Activated naive CD4-positive, alpha-beta T cell treated with anti-CD3 and anti-CD28 coated beads for 36 hours (primary cell): ENCODE measurements at regions of chrX and their contacts with region 1.

Region 1: DNA sequence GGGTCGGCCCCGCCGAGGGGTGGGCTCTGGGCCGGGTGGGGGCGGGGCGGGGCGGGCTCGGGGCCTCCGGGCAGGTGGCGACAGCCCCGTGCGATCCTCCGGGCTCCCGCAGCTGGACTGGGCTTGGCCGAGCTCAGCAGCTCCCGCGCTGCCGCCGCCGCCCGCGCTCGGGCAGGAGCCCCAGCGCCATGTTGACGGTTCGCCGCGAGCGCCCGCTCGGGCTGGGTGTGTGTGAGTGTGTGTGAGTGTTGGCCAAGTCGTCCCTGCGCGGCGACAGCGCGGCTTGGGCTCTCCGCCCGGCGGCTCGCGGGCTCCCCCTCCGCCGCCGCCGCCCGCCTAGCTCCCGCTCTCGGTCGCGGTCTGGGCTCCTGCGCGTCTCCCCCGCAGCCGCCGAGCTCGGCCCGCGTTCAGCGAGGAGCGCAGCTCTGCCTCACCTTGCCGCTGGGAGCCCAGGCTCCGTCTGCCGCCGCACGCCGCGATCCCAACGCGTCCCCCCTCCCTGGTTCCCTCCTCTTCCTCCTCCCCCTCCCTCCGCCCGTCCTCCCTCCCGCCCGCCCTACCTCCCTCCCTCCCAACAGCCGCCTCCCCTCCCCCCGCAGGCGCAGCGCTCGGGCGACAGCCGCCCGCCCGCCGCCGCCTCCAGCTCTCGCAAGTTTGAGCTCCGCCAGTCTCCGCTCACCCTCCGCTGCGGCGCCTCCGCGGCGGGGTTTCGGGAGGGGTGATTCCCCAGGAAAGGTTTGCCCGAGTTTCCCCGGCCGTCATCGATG is at the start of gene BCOR:
- DNase-seq: peak; percentile 75
- H3K4me3 Mint-ChIP-seq: peak within 1 kb of the TSS; percentile 86
- H3K27ac Mint-ChIP-seq: peak within 1 kb of the TSS; percentile 82
- H3K4me1 Mint-ChIP-seq: peaks cover 24% of the 10 kb centered on the region
- H3K27me3 Mint-ChIP-seq: no peaks in the 10 kb centered on the region
- total RNA-seq, gene BCOR: 29.1 to 29.9 TPM

Region 2: DNA sequence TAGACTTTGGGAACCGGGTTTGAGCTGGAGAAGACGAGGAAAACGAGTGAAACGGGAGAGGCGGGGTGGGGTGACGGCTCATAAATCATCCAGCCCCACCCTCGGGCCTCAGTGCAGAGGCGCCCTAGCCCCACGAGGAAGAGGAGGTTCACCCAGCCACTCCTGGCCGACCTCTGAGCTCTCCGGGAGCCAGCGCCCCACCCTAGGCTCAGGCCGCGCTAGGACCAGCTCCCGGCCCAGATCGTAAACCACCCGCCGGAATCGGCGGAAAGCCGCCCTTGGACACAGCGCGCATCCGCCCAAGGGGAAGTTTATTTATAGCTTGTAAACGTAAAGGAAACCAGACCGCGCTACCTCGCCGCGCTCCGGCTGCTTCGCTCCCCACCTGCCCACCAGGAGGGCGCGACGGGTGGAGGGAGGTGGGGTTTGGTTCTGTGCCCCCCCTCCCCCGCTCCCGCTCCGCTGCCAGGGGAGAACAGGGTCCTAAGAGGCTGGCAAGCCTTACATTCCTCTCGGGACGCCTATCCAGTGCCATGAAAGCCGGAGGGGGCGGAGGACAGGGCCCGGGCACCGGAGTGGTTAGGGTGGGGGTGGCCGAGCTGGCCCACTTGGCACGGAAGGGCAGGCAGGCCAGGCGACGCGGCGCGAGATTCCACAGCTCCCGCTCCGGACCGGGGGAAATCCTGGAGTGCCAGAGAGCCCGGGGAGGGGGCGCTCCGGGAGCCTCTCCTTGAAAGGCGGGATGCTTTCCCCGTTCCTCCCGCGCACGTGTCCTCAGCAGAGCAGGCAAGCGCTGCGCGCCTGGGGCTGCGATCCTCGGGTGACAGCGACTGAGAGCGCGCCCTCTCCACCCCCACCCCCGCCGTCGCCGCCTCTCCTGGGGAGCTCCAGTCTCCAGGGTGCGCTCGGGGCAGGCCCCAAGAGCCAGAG is 84.1 kb before region 1 on chrX:
- CTCF ChIA-PET with region 1: no interaction called
- intact Hi-C with region 1: loop called (anchors 2 kb)
- DNase-seq: peak; percentile 55
- H3K4me3 Mint-ChIP-seq: peak overlapping the region; percentile 69
- H3K27ac Mint-ChIP-seq: peak overlapping the region; percentile 63
- H3K4me1 Mint-ChIP-seq: peaks cover 26% of the 10 kb centered on the region
- H3K27me3 Mint-ChIP-seq: peaks cover 24% of the 10 kb centered on the region

Region 3: GRCh38 chrX:40108959-40109287 is 11.2 kb after region 1 on chrX:
- CTCF ChIA-PET with region 1: interaction called, 5 read pairs
- intact Hi-C with region 1: loop called (anchors 1 kb)
- DNase-seq: peak; percentile 71
- H3K4me3 Mint-ChIP-seq: peak overlapping the region; percentile 50
- H3K27ac Mint-ChIP-seq: no peak overlapping the region
- H3K4me1 Mint-ChIP-seq: peaks cover 8% of the 10 kb centered on the region
- H3K27me3 Mint-ChIP-seq: peaks cover 2% of the 10 kb centered on the region

Region 4: DNA sequence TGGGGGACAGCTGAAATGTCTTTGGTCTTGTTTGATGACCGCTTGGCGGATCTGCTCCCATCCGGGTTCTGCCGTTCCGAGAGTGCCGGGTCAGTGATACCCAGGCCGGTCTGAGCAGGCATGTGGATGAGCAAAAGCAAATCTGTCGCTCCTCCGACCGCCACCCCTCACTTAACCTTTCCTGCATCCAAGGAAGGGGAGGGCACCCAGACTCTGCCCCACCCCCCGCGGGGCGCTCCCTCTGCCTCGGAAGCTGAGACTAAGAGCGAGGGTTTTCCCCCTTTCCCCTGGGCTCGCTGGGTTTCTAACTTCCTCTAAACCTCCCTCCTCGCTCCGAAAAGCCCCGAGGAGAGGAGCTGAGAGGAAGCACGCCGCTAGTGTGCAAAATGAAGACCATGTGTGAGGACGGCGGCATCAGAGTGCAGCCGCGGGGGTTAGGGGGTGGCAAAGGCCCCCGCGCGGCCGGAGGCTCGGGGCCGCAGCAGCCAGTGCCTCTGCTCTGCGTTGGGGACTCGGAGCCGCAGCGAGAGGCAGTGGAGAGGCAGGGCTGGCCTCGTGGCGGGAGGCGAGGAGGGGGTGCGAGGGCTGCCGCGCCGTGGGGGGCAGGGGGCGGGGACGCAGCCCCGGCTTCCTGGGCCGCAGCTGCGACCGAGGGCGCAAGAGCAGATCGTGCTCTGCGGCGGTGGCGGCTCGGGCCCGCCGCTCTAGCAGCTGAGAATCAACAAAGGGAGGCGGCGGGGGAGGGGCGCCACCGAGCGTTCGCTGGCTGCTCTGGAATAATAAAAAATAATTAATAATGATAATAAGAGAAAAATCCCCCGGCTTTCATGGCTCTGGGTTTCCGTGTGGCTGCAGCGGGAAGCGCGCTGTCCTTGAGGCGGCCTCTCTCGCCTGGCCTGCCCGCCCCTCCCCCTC is 55.9 kb after region 1 on chrX:
- CTCF ChIA-PET with region 1: interaction called, 3 read pairs
- intact Hi-C with region 1: loop called (anchors 1 kb)
- DNase-seq: peak; percentile 91
- H3K4me3 Mint-ChIP-seq: peak overlapping the region; percentile 72
- H3K27ac Mint-ChIP-seq: peak overlapping the region; percentile 53
- H3K4me1 Mint-ChIP-seq: peaks cover 10% of the 10 kb centered on the region
- H3K27me3 Mint-ChIP-seq: no peaks in the 10 kb centered on the region